Activated naive CD4-positive, alpha-beta T cell treated with anti-CD3 and anti-CD28 coated beads for 36 hours (primary cell): ENCODE measurements at regions of chr9 and their contacts with region 1.

Region 1: DNA sequence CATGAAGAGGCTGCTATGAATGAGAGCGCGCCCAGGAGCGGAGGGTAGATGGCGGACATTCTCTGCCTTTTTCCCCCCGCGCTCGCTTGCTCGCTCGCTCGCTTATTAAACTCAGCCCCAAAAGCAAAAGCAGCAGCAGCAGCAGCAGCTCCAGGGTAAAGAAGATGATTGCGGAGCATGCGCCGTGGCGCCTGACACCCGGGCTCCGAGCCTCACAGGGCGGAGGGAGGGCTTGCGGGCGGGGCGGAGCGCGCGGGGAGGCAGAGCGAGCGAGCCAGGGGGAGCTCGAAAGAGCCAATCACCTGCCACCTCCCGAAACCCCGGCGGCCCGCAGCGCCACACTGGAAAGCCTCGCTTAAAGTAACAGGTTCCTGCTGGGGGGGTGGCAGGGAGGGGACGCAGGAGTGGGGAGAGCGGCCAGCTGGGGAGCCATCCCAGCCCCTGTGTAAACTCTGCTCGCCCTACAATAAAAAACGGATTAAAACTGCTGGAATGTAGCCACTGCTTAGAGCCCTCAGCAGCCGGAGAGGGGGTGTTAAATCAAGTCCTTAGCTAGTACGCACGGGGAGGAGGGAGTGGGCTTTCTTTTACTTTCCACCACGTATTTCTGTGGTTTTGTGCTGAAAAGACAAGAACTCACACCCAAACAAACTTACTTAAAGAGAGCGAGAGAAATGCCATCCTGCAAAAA is at the start of gene MLLT3:
- DNase-seq: peak; percentile 97
- H3K4me3 Mint-ChIP-seq: peak within 1 kb of the TSS; percentile 98
- H3K27ac Mint-ChIP-seq: peak within 1 kb of the TSS; percentile 95
- H3K4me1 Mint-ChIP-seq: peaks cover 36% of the 10 kb centered on the region
- H3K27me3 Mint-ChIP-seq: no peaks in the 10 kb centered on the region
- total RNA-seq, gene MLLT3: 44.3 to 51.4 TPM

Region 2: DNA sequence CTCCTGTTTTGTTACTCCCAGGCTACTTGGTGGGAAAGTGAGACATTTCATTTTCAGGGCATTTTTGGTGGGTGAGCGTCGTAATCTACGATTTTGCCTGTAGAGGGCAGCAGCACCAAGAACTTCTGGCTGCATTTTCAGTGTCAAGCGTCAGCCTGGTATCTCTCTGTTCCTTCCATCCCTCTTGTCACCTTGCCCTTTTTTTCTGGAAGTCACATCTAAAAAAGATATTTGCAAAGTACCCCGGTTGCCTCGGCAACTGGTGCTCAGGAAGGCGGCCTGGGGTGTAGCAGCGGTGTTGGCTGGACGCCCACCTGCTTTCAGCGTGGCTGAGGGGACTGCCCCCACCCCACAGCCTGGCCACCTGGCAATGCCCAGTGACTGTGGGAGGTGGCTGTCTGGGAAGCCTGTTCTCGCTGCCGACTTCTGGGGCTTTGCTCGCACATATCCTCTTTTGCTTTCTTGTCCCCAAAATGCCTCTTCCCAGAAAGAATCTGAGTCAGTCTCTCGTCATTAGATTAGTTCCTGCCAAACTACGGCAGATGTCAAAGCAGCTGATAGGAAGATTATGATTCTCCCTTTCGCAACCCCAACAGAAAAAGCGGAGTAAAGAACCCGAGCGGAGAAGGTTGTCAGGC is 1129.2 kb before region 1 on chr9:
- CTCF ChIA-PET with region 1: no interaction called
- intact Hi-C with region 1: loop called (anchors 10 kb)
- DNase-seq: peak; percentile 68
- H3K4me3 Mint-ChIP-seq: peak overlapping the region; percentile 16
- H3K27ac Mint-ChIP-seq: peak overlapping the region; percentile 33
- H3K4me1 Mint-ChIP-seq: peaks cover 20% of the 10 kb centered on the region
- H3K27me3 Mint-ChIP-seq: peaks cover 5% of the 10 kb centered on the region

Region 3: DNA sequence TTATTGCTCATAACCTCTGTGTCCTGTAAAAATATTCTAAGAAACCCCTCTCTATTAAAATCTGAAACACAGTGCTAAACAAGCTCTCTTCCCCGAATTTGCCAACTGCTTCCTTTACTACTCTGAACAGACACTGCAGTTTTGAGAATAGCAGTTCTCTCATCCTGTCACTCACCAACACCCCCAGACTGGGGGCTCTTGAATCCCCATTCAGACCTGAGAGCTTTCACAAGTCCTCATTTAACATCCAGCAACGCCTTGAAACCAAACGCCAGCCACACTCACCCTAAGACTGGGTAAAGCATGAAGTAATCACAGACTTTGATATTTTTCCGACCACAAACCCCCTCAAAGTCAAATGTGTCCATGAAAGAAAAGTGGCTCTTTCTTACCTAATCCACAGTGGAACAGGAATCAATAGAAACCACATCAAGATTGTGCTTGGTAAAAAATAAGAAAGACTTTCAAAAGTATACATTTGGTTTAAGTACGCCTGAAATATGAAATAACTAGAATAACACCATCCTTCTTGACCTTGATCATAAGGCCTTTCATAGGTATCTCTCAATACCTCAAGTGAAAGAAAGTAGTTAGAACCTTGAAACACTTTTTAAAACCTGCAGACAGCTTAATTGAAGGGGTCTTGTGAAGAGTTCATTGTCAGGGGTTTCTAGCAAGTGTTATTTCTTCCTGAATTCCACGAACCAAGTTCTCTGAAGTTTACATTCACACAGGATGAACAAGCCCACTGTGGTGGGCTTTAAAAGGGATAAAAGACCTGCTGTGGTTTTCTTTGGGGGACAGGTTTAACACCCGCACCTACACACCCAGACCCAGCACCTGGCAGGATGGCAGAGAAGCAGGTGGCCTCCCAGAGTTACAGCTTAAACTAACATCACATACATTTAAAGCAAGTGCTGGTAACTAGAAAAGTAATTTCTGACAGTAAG is 412.8 kb before region 1 on chr9:
- CTCF ChIA-PET with region 1: no interaction called
- intact Hi-C with region 1: loop called (anchors 2 kb)
- DNase-seq: peak; percentile 56
- H3K4me3 Mint-ChIP-seq: no peak overlapping the region
- H3K27ac Mint-ChIP-seq: peak overlapping the region; percentile 70
- H3K4me1 Mint-ChIP-seq: peaks cover 31% of the 10 kb centered on the region
- H3K27me3 Mint-ChIP-seq: no peaks in the 10 kb centered on the region

Region 4: GRCh38 chr9:20356403-20357035 is 266.0 kb before region 1 on chr9:
- CTCF ChIA-PET with region 1: interaction called, 12 read pairs
- intact Hi-C with region 1: loop called (anchors 1 kb)
- DNase-seq: peak; percentile 85
- H3K4me3 Mint-ChIP-seq: no peak overlapping the region
- H3K27ac Mint-ChIP-seq: peak overlapping the region; percentile 46
- H3K4me1 Mint-ChIP-seq: peaks cover 72% of the 10 kb centered on the region
- H3K27me3 Mint-ChIP-seq: no peaks in the 10 kb centered on the region

Region 5: DNA sequence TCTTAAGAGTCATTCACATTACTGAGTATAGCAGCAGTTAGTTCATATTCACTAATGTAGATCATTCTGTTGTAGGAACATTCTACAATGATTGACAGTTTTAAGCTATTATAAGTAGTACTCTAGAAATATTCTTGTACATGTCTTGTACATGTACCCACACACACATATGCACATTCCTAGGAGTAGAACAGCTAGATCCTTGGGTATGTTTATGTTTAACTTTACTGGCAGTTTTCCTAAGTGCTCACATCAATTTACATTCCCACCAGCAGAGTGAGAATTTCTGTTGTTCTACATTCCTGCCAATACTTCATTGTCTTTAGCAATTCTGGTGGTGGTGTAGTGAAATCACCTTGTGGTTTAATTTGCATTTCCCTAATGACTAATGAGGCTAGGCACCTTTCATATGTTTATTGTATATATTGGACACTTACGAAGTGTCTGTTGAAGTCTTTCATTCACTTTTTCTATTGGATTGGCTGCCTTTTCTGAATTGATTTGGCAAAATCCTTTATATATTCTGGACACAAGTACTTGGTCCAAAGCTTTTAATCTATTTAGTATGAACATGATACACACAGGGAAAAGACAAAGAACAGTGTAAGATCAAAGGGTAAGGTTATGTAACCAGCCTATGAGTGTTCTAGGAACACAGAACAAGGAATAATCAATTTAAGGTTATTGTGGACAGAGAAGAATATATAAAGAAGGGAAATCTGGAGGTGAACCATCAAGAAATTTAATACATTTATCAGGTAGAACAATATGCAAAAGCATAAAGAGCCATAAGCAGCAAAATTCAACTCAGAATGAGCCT is 95.8 kb before region 1 on chr9:
- CTCF ChIA-PET with region 1: no interaction called
- intact Hi-C with region 1: loop called (anchors 1 kb)
- DNase-seq: no peak
- H3K4me3 Mint-ChIP-seq: no peak overlapping the region
- H3K27ac Mint-ChIP-seq: no peak overlapping the region
- H3K4me1 Mint-ChIP-seq: peaks cover 80% of the 10 kb centered on the region
- H3K27me3 Mint-ChIP-seq: no peaks in the 10 kb centered on the region

Region 6: DNA sequence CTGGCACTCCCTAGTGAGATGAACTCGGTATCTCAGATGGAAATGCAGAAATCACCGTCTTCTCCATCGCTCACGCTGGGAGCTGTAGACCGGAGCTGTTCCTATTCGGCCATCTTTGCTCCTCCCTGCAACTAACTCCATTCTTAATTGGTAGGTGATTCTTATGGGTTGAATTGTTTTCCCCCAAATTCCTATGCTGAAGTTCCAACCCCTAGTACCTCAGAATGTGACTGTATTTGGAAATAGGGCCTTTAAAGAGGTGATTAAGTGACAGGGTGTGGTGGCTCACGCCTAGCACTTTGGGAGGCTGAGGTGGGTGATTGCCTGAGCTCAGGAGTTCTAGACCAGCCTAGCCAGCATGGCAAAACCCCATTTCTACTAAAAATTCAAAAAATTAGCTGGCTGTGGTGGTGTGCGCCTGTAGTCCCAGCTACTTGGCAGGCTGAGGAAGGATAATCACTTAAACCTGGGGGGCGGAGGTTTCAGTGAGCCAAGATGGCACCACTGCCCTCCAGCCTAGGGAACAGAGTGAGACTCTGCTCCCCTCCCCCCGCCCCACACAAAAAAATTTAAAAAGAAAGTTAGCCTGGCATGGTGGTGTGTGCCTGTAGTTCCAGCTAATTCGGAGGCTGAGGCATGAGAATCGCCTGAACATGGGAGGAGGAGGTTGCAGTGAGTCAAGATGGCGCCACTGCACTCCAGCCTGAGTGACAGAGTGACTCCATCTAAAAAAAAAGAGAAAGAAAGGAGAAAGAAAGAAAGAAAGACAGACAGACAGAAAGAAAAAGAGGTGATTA is 36.4 kb after region 1 on chr9:
- CTCF ChIA-PET with region 1: interaction called, 4 read pairs
- intact Hi-C with region 1: loop called (anchors 1 kb)
- DNase-seq: no peak
- H3K4me3 Mint-ChIP-seq: no peak overlapping the region
- H3K27ac Mint-ChIP-seq: peak overlapping the region; percentile 81
- H3K4me1 Mint-ChIP-seq: peaks cover 4% of the 10 kb centered on the region
- H3K27me3 Mint-ChIP-seq: no peaks in the 10 kb centered on the region

Region 7: DNA sequence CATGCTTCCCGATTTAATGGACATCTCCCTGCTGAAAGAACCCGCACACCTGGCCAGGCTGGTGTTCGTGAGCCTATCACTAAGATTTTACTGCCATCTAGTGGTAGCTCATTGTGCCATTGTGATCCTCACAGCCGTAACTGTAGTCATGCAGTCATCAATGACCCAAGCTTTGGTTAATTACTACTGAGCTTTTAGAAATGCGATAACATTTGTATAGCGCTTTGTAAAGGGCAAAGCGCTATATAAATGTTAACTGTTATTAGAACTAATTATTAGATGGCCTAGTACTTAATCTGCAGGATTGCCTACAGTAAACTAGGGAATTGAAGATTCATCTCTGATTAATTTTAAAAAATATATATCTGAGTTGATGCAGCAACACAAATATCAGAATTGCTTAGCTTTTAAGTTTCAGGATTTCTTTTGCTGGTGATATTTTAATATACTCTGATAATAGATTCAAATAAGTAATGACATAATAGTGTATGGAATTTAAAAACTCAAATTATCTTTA is 318.8 kb after region 1 on chr9:
- CTCF ChIA-PET with region 1: interaction called, 60 read pairs
- intact Hi-C with region 1: loop called (anchors 1 kb)
- DNase-seq: peak; percentile 63
- H3K4me3 Mint-ChIP-seq: no peak overlapping the region
- H3K27ac Mint-ChIP-seq: no peak overlapping the region
- H3K4me1 Mint-ChIP-seq: peaks cover 3% of the 10 kb centered on the region
- H3K27me3 Mint-ChIP-seq: no peaks in the 10 kb centered on the region